Activated CD8-positive, alpha-beta T cell treated with anti-CD3 and anti-CD28 coated beads, Interleukin-2, amount 10 ng/mL, durations not matched to agents 7 days and 5 days (primary cell): ENCODE measurements at regions of chr14 and their contacts with region 1.

Region 1: DNA sequence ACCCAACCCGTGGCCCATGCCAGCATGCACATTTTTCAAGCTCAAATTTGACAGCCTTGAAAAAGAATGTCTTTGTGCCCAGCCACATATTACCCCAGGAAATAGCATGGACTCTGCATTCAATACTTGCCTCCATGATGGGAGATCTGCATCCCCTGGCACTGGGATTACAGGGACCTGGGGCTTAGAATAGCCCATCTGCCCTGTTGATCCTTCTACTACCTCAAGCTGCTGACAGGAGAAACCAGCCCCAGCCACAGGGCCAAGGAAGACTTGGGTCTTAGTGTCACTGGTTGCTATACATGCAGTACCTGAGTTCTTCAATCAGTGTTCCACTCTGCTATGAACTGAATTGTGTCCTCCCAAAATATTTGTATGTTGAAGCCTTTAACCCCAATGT is 85.3 kb downstream of the LRRC74A start:
- DNase-seq: no peak
- ATAC-seq: no peak
- H3K4me3 Mint-ChIP-seq: no peak overlapping the region
- H3K27ac Mint-ChIP-seq: peak overlapping the region; percentile 64
- H3K4me1 Mint-ChIP-seq: peaks cover 66% of the 10 kb centered on the region
- H3K27me3 Mint-ChIP-seq: no peaks in the 10 kb centered on the region

Region 2: GRCh38 chr14:76929927-76930326 is 18.5 kb after region 1 on chr14:
- CTCF ChIA-PET with region 1: interaction called, 28 read pairs
- POLR2A ChIA-PET with region 1: interaction called, 3 read pairs
- DNase-seq: peak; percentile 82
- ATAC-seq: peak; percentile 70
- H3K4me3 Mint-ChIP-seq: peak overlapping the region; percentile 48
- H3K27ac Mint-ChIP-seq: peak overlapping the region; percentile 82
- H3K4me1 Mint-ChIP-seq: peaks cover 79% of the 10 kb centered on the region
- H3K27me3 Mint-ChIP-seq: no peaks in the 10 kb centered on the region

Region 3: GRCh38 chr14:76956316-76957090 is 45.0 kb after region 1 on chr14:
- CTCF ChIA-PET with region 1: interaction called, 33 read pairs
- POLR2A ChIA-PET with region 1: interaction called, 3 read pairs
- DNase-seq: peak; percentile 93
- ATAC-seq: peak; percentile 56
- H3K4me3 Mint-ChIP-seq: peak overlapping the region; percentile 72
- H3K27ac Mint-ChIP-seq: peak overlapping the region; percentile 92
- H3K4me1 Mint-ChIP-seq: peaks cover 83% of the 10 kb centered on the region
- H3K27me3 Mint-ChIP-seq: no peaks in the 10 kb centered on the region

Region 4: DNA sequence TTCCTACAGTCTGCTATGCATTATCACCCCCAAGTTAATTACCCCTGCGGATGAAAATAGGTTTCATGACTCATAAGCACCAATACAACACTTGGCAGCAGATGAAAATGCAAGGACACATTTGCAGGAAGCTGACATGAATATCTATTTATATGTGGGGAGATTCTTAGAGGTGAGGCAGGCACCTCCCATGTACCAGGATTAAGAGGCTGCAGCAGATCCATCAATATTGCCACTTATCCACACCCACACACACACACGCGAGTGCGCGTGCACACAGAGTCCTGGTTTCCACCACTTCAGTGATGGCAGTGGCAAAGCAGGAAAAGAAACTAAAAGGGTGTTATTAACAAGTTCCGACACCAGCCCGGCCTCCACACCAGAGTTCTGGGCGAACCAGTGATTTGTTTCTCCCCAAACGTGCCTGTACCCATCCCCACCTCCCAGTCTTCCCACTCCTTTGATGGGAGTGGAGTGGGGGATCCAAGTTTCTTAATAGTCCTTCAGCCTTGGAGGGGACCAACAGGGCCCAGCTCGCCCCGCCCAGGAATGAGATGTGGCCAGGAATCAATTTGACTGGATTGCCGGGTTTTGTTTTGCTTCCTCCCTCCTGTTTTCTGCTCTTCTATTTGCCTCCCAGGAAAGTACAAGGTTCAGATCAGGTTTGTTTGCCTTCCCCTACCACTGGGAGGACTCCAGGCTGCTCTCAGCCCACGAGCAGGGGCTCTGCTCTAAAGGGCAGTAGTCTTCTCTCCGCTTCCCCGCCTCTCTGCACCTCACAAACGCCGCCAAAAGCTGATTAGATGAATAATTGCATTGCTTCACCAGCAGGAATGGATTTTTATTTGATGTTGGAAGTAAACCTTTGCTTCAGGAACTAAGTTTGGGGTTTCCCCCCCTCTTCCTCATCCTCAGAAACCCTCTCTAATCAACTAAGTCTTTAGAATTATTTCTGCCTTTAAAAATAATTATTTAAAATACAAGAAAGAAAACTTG is 111.8 kb after region 1 on chr14:
- CTCF ChIA-PET with region 1: interaction called, 29 read pairs
- POLR2A ChIA-PET with region 1: interaction called, 4 read pairs
- DNase-seq: no peak
- ATAC-seq: no peak
- H3K4me3 Mint-ChIP-seq: peak overlapping the region; percentile 10
- H3K27ac Mint-ChIP-seq: peak overlapping the region; percentile 74
- H3K4me1 Mint-ChIP-seq: peaks cover 44% of the 10 kb centered on the region
- H3K27me3 Mint-ChIP-seq: no peaks in the 10 kb centered on the region

Region 5: GRCh38 chr14:77040059-77040740 is 128.7 kb after region 1 on chr14:
- CTCF ChIA-PET with region 1: interaction called, 31 read pairs
- POLR2A ChIA-PET with region 1: no interaction called
- DNase-seq: peak; percentile 94
- ATAC-seq: peak; percentile 72
- H3K4me3 Mint-ChIP-seq: peak overlapping the region; percentile 76
- H3K27ac Mint-ChIP-seq: peak overlapping the region; percentile 97
- H3K4me1 Mint-ChIP-seq: peaks cover 89% of the 10 kb centered on the region
- H3K27me3 Mint-ChIP-seq: no peaks in the 10 kb centered on the region